Aorta (tissue), 5 donors: ENCODE measurements at regions of chr19 and their contacts with region 1.

Region 1: GRCh38 chr19:54168174-54168917 is 4.6 kb downstream of the TMC4 start:
- DNase-seq: peak; percentile 95 to 99
- ATAC-seq: peak; percentile 92
- H3K4me3 ChIP-seq: no peak overlapping the region
- H3K27ac ChIP-seq: no peak overlapping the region
- H3K4me1 ChIP-seq: no peaks in the 10 kb centered on the region
- H3K27me3 ChIP-seq: no peaks in the 10 kb centered on the region

Region 2: DNA sequence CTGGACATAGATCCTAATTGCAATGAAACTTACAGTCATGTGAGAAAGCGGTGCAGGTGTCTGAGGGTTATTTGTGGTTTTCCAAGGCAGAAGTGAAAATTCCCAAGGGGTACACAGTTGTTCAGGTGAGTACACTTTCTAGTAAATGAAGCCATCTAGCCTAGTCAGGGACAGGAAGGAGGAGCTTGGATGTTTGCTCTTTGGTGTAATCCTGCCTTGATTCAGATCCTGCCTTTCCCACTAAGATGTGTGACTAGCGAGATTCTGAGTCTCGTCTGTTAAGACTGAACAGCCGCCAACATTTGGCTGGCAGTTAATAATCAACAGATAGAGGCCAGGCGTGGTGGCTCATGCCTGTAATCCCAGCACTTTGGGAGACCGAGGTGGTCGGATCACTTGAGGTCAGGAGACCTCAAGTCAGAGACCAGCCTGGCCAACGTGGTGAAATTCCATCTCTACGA is 34.8 kb after region 1 on chr19:
- intact Hi-C with region 1: loop called in 1 of 2 experiments (anchors 5 kb)
- DNase-seq: peak in 1 of 2 donors; percentile 6
- ATAC-seq: no peak
- H3K4me3 ChIP-seq: no peak overlapping the region
- H3K27ac ChIP-seq: no peak overlapping the region
- H3K4me1 ChIP-seq: no peaks in the 10 kb centered on the region
- H3K27me3 ChIP-seq: no peaks in the 10 kb centered on the region

Region 3: DNA sequence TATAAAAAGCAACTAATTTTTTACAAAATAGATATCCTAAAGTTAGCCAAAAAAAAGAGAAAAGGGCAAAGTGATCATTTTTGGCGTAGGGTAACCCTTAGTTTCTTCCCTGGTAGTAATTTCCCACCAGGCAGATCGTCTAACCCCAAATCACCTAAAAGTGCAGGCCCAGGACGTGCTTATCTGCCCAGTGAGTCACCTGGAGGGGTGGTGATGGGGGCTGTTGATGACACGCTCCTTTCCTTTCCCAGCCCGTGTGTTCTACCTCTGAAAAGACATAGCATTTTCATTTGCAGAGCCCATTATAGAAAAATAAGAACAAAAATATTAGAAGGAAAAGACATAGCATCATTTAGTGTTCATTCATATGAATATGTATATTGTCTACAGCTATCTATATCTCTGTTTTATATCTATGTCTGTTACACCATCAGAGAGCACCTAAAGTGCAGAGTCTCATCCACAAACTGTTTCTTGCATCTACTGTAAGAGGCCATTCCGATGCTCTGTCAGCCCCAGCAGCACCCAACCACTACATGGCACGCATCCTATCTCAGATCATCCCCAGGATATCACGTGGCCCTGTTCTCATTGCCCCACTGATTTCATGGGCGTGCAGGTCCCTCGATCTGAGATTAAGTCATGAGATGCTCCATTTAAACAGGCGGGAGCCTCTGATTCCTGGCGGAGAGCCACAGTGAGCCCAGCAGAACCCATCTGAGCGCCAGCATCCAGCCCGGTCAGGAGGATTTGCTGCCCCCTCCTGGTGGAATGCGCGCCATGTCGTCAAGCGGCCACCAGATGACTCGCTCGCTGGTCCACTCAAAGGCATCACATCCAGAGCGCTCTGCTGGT is 63.0 kb after region 1 on chr19:
- intact Hi-C with region 1: loop called (anchors 1 to 2 kb)
- DNase-seq: peak; percentile 90 to 98
- ATAC-seq: peak; percentile 93
- H3K4me3 ChIP-seq: no peak overlapping the region
- H3K27ac ChIP-seq: no peak overlapping the region
- H3K4me1 ChIP-seq: no peaks in the 10 kb centered on the region
- H3K27me3 ChIP-seq: no peaks in the 10 kb centered on the region